Gastrocnemius medialis (tissue), 4 donors: ENCODE measurements at regions of chr4 and their contacts with region 1.

Region 1: GRCh38 chr4:48315728-48316630 is 25.4 kb upstream of the SLAIN2 start:
- DNase-seq: no peak
- ATAC-seq: peak; percentile 36 to 66
- H3K4me3 ChIP-seq: no peak overlapping the region
- H3K27ac ChIP-seq: no peak overlapping the region
- H3K4me1 ChIP-seq: no peaks in the 10 kb centered on the region
- H3K27me3 ChIP-seq: no peaks in the 10 kb centered on the region
- CTCF ChIP-seq: peak; percentile 30 to 71 (median 51)
- POLR2A ChIP-seq: no peak

Region 2: GRCh38 chr4:47926639-47927258 is 389.2 kb before region 1 on chr4:
- in situ Hi-C with region 1: no loop called
- intact Hi-C with region 1: no loop called
- DNase-seq: no peak
- ATAC-seq: peak in 1 of 2 donors; percentile 72
- H3K4me3 ChIP-seq: peak overlapping the region in 1 of 4 donors; percentile 39
- H3K27ac ChIP-seq: no peak overlapping the region
- H3K4me1 ChIP-seq: no peaks in the 10 kb centered on the region
- H3K27me3 ChIP-seq: no peaks in the 10 kb centered on the region
- CTCF ChIP-seq: peak in 3 of 5 experiments; percentile 21 to 59 (median 42)
- POLR2A ChIP-seq: no peak

Region 3: GRCh38 chr4:48410812-48411211 is 94.8 kb after region 1 on chr4:
- in situ Hi-C with region 1: loop called in 1 of 4 experiments (anchors 5 kb)
- intact Hi-C with region 1: no loop called
- DNase-seq: no peak
- ATAC-seq: no peak
- H3K4me3 ChIP-seq: no peak overlapping the region
- H3K27ac ChIP-seq: no peak overlapping the region
- H3K4me1 ChIP-seq: peaks cover 0 to 3% of the 10 kb centered on the region in 2 donors
- H3K27me3 ChIP-seq: no peaks in the 10 kb centered on the region
- CTCF ChIP-seq: no peak
- POLR2A ChIP-seq: no peak